ENCODE measurements at regions of chr5 and their contacts with region 1.

Region 1: DNA sequence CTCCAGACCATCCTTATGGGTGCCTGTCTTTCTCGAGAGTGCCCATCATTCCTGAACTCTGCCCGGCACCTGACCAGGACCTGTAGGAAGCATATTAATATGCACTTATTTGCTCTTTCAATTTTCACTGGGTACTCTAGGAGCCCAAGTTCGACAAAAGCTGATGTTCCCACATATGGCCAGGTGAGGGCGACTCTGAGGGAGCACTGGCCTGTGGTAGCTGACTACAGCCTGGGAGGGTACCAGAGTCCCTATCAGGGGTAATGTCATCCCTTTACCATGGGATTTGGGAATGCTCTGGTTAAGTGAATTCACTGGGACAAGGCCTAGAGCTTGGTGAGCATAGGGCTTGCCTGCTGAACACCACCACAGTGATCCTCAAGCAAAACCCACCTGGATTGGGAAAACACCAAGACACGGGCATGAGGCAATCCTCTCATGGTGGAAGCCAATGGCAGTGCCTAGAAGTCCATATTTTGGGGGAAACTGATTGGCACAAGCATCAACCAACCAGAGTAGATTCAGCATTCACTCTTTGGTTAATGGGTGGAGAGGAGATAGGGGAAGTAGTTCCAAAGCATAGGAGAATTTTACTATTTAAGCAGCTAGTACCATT is 112.2 kb downstream of the MTX3 start:
- DNase-seq: no peak
- ATAC-seq: no peak
- H3K4me3 ChIP-seq: no peak overlapping the region
- H3K27ac ChIP-seq: no peak overlapping the region
- H3K4me1 ChIP-seq: peaks cover 0 to 26% (median 0%) of the 10 kb centered on the region in 12 donors
- H3K27me3 ChIP-seq: no peaks in the 10 kb centered on the region
- CTCF ChIP-seq: peak in 6 of 12 donors; percentile 7 to 34 (median 28)
- POLR2A ChIP-seq: no peak

Region 2: GRCh38 chr5:79974891-79975290 is 96.1 kb after region 1 on chr5:
- intact Hi-C with region 1: loop called in 3 of 10 experiments (anchors 5 to 10 kb)
- DNase-seq: no peak
- ATAC-seq: peak; percentile 38 to 78 (median 60)
- H3K4me3 ChIP-seq: no peak overlapping the region
- H3K27ac ChIP-seq: peak overlapping the region in 3 of 12 donors; percentile 40 to 57 (median 53)
- H3K4me1 ChIP-seq: peaks cover 0 to 12% (median 0%) of the 10 kb centered on the region in 12 donors
- H3K27me3 ChIP-seq: no peaks in the 10 kb centered on the region
- CTCF ChIP-seq: no peak
- POLR2A ChIP-seq: no peak

Region 3: GRCh38 chr5:79982136-79982535 is 103.3 kb after region 1 on chr5:
- intact Hi-C with region 1: loop called in 2 of 10 experiments (anchors 10 kb)
- DNase-seq: no peak
- ATAC-seq: no peak
- H3K4me3 ChIP-seq: no peak overlapping the region
- H3K27ac ChIP-seq: no peak overlapping the region
- H3K4me1 ChIP-seq: peaks cover 0 to 7% (median 0%) of the 10 kb centered on the region in 12 donors
- H3K27me3 ChIP-seq: no peaks in the 10 kb centered on the region
- CTCF ChIP-seq: no peak
- POLR2A ChIP-seq: no peak

Measured in heart left ventricle (tissue), 16 donors.